CD8-positive, alpha-beta memory T cell (primary cell): ENCODE measurements at regions of chr12 and their contacts with region 1.

Region 1: GRCh38 chr12:96399919-96400797 is at the start of gene CDK17:
- DNase-seq: peak; percentile 84 to 94 (median 91)
- H3K4me3 ChIP-seq: peak within 1 kb of the TSS; percentile 67
- H3K4me3 Mint-ChIP-seq: peak within 1 kb of the TSS; percentile 95 to 99 (median 96)
- H3K27ac ChIP-seq: peak within 1 kb of the TSS; percentile 94
- H3K27ac Mint-ChIP-seq: peak within 1 kb of the TSS; percentile 95 to 99 (median 98)
- H3K4me1 ChIP-seq: peaks cover 37% of the 10 kb centered on the region
- H3K4me1 Mint-ChIP-seq: peaks cover 46 to 50% (median 48%) of the 10 kb centered on the region in 3 donors
- H3K27me3 ChIP-seq: no peaks in the 10 kb centered on the region
- H3K27me3 Mint-ChIP-seq: peaks cover 0 to 2% of the 10 kb centered on the region in 2 donors
- total RNA-seq, gene CDK17: 34.6 to 36.0 TPM

Region 2: DNA sequence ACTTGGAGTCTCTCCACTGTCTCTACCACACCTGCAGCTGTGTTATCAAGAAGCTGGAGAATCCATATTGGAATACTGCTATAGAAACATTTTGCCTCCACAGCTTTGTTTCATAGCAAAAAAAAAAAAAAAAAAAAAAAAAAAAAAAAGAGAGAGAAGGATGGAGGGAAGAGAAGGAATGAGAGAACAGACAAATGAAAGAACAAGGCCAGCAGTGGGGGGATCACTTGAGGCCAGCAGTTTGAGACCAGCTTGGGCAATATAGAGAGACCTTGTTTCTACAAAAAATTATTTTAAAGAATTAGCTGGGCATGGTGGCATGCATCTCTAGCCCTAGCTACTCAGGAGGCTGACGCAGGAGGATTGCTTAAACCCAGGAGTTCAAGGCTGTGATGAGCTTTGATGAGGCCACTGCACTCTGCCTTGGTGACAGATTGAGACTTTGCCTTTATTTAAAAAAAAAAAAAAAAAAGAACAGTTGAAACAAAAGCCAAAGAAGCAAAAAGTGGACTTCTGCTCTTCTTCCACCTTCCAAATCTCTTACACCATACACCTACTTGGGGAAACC is 1174.4 kb before region 1 on chr12:
- CTCF ChIA-PET with region 1: no interaction called
- POLR2A ChIA-PET with region 1: interaction called, 13 read pairs
- DNase-seq: no peak
- H3K4me3 ChIP-seq: no peak overlapping the region
- H3K4me3 Mint-ChIP-seq: peak overlapping the region in 1 of 7 donors; percentile 2
- H3K27ac ChIP-seq: no peak overlapping the region
- H3K27ac Mint-ChIP-seq: peak overlapping the region in 1 of 8 donors; percentile 58
- H3K4me1 ChIP-seq: no peaks in the 10 kb centered on the region
- H3K4me1 Mint-ChIP-seq: peaks cover 36 to 76% (median 44%) of the 10 kb centered on the region in 3 donors
- H3K27me3 ChIP-seq: no peaks in the 10 kb centered on the region
- H3K27me3 Mint-ChIP-seq: no peaks in the 10 kb centered on the region

Region 3: DNA sequence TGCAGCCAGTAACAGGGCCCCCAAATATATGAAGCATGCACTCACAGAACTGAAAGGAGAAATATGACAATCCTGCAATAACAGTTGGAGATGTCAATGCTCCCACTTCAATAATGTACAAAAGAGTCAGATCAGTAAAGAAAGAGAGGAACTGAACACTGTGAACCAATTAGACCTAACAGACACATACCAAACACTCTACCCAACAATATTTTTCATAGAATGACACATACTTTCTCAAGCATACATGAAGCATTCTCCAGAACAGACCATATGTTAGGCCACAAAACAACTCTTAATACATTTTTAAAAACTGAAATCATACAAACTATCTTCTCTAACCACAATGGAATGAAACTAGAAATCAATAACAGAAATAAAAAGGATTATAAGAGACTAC is 125.8 kb before region 1 on chr12:
- CTCF ChIA-PET with region 1: interaction called, 11 read pairs
- POLR2A ChIA-PET with region 1: no interaction called
- DNase-seq: no peak
- H3K4me3 ChIP-seq: no peak overlapping the region
- H3K4me3 Mint-ChIP-seq: no peak overlapping the region
- H3K27ac ChIP-seq: no peak overlapping the region
- H3K27ac Mint-ChIP-seq: peak overlapping the region; percentile 29 to 85 (median 62)
- H3K4me1 ChIP-seq: peaks cover 7% of the 10 kb centered on the region
- H3K4me1 Mint-ChIP-seq: peaks cover 23 to 46% (median 39%) of the 10 kb centered on the region in 3 donors
- H3K27me3 ChIP-seq: no peaks in the 10 kb centered on the region
- H3K27me3 Mint-ChIP-seq: no peaks in the 10 kb centered on the region

Region 4: DNA sequence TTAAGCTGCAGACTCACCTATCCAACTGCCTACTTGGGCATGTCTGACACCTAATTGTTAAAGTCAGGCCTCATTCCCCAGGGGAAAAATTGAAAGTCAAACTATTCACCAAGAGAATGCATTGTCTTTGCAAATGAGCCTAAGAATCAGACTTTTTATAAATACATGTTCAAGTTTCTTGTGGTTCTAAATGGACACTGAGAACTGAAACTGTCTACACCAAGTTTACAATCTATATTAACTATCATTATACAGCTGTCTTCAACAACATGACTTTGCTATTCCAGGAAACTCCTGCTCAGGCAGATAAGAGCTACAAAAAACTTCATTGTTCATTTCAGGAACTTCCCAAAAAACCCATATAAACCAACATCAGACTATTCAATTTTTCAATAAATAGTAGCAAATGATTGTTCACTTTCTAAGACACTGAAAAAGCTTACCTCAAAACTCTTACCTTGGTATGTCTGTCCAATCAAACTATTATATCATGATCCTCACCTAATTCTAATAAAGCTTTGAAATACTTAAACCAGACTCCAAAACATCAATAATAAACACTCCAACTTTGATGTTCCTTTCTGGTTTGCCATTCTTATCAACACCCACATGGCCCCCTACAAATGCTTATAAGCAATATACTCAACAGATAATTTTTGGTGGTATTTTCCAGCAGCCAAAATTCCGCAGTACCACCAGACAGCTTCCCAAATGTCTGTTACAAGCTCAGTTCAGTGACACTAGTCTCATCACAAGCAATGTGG is 24.1 kb before region 1 on chr12:
- CTCF ChIA-PET with region 1: interaction called, 20 read pairs
- POLR2A ChIA-PET with region 1: interaction called, 16 read pairs
- DNase-seq: no peak
- H3K4me3 ChIP-seq: no peak overlapping the region
- H3K4me3 Mint-ChIP-seq: peak overlapping the region in 5 of 7 donors; percentile 19 to 78 (median 38)
- H3K27ac ChIP-seq: peak overlapping the region; percentile 71
- H3K27ac Mint-ChIP-seq: peak overlapping the region; percentile 41 to 98 (median 72)
- H3K4me1 ChIP-seq: peaks cover 83% of the 10 kb centered on the region
- H3K4me1 Mint-ChIP-seq: peaks cover 70 to 94% (median 86%) of the 10 kb centered on the region in 3 donors
- H3K27me3 ChIP-seq: no peaks in the 10 kb centered on the region
- H3K27me3 Mint-ChIP-seq: peaks cover 0 to 3% of the 10 kb centered on the region in 2 donors

Region 5: DNA sequence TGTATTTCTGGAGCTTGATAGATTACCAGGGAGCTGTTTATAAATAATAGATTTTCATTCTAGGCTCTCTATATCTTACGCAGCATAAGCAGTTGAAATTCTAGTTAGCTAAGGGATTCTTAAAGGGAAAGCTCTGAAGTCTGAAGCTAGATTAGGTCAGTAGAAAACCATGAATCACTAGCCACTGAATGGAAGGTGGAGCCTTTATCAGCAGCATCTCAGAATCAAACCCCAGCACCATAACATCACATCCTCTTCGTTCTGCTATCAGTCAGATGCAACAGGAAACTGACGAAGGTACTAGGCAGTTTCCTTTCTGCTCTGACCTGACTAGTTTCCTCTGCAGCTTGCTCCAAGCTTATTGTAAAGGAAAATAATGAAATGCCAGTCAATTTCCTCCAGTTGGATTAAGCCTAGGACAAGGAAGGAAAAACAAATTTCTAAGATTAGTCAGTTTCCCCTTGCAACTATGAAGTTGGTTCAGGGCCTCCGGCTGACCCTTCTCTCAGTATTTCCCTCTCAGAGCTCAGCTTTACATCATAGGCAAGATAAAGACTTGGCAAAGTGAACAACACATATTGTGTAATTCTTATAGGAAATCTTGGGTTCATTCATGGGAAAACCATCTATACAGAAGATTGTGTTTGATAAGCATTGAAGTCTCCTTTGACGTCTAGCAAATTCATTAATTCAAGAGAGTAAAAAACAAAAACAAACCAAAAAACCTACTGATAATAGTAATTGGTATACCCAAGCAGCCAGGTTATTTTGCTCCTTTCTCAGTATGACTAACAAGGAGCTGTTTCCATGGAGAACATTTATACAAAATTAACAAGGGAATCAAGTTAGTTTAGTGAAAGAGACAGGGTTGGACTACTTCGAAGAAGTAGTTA is 45.8 kb after region 1 on chr12:
- CTCF ChIA-PET with region 1: interaction called, 13 read pairs
- POLR2A ChIA-PET with region 1: interaction called, 13 read pairs
- DNase-seq: peak; percentile 13 to 86 (median 77)
- H3K4me3 ChIP-seq: no peak overlapping the region
- H3K4me3 Mint-ChIP-seq: peak overlapping the region; percentile 1 to 80 (median 55)
- H3K27ac ChIP-seq: peak overlapping the region; percentile 72
- H3K27ac Mint-ChIP-seq: peak overlapping the region; percentile 93 to 100 (median 98)
- H3K4me1 ChIP-seq: peaks cover 33% of the 10 kb centered on the region
- H3K4me1 Mint-ChIP-seq: peaks cover 35 to 52% (median 50%) of the 10 kb centered on the region in 3 donors
- H3K27me3 ChIP-seq: no peaks in the 10 kb centered on the region
- H3K27me3 Mint-ChIP-seq: no peaks in the 10 kb centered on the region

Region 6: GRCh38 chr12:96516472-96517430 is 116.6 kb after region 1 on chr12:
- CTCF ChIA-PET with region 1: interaction called, 31 read pairs
- POLR2A ChIA-PET with region 1: interaction called, 8 read pairs
- DNase-seq: peak; percentile 72 to 89 (median 77)
- H3K4me3 ChIP-seq: no peak overlapping the region
- H3K4me3 Mint-ChIP-seq: peak overlapping the region in 4 of 7 donors; percentile 39 to 69 (median 57)
- H3K27ac ChIP-seq: no peak overlapping the region
- H3K27ac Mint-ChIP-seq: peak overlapping the region; percentile 26 to 88 (median 68)
- H3K4me1 ChIP-seq: peaks cover 5% of the 10 kb centered on the region
- H3K4me1 Mint-ChIP-seq: peaks cover 5 to 7% (median 6%) of the 10 kb centered on the region in 3 donors
- H3K27me3 ChIP-seq: no peaks in the 10 kb centered on the region
- H3K27me3 Mint-ChIP-seq: no peaks in the 10 kb centered on the region